ENCODE measurements at regions of chr16 and their contacts with region 1.

Region 1: GRCh38 chr16:74998481-74999218 is at the start of gene ZNRF1:
- DNase-seq: peak; percentile 94 to 95 (median 95)
- ATAC-seq: peak; percentile 86
- H3K4me3 ChIP-seq: peak within 1 kb of the TSS; percentile 62
- H3K27ac ChIP-seq: peak within 1 kb of the TSS; percentile 73
- H3K4me1 ChIP-seq: peaks cover 31 to 40% of the 10 kb centered on the region in 2 experiments
- H3K27me3 ChIP-seq: no peaks in the 10 kb centered on the region
- CTCF ChIP-seq: peak; percentile 83 to 86 (median 84)
- EP300 ChIP-seq: no peak
- POLR2A ChIP-seq: no peak
- RAD21 ChIP-seq: peak; percentile 92 to 95
- polyA plus RNA-seq, gene ZNRF1: 9.5 to 20.0 TPM

Region 2: DNA sequence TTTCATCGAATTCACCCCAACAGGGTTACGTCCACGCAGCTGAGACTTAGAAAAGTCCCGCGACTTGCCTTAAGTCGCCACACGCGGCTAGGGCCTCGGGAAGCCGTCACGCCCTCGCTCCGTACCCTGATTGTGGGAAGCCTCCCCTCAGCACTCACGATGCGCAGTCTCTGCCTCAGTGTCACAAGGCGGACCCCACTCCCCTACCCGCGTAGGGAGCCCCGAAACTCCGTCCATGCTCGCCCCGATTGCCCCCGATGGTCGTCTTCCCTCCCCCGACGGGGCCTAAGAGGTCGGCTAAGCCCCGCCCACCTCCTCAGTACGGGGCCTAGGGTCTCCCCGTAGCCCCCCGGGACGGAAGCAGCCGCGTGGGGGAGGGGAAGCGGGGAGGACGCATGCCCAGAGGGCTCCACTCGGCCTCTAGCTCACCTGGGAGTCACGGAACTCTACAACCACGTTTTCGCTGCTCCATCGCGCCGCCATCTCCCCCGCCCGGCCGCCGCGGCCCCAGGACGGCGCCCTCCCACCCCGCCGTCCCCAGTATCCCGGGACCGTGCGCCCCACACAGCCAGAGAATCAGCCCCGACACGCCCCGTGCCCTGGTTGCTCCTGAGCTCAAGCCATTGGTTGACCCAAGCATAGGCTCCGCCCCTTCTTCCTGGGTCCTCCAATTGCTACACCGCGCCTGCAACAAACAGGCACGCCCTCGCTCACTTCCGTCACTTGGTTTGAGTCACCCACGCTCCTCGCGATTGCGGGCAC is 13.9 kb before region 1 on chr16 and contains the start of gene WDR59:
- CTCF ChIA-PET with region 1: no interaction called
- POLR2A ChIA-PET with region 1: interaction called, 17 read pairs
- in situ Hi-C with region 1: no loop called
- intact Hi-C with region 1: no loop called
- DNase-seq: peak; percentile 95 to 100 (median 96)
- ATAC-seq: peak; percentile 98
- H3K4me3 ChIP-seq: peak within 1 kb of the TSS; percentile 89
- H3K27ac ChIP-seq: peak within 1 kb of the TSS; percentile 85
- H3K4me1 ChIP-seq: peaks cover 17 to 31% of the 10 kb centered on the region in 2 experiments
- H3K27me3 ChIP-seq: no peaks in the 10 kb centered on the region
- CTCF ChIP-seq: no peak
- EP300 ChIP-seq: no peak
- POLR2A ChIP-seq: peak; percentile 85
- RAD21 ChIP-seq: no peak
- polyA plus RNA-seq, gene WDR59: 12.7 to 16.2 TPM

Region 3: DNA sequence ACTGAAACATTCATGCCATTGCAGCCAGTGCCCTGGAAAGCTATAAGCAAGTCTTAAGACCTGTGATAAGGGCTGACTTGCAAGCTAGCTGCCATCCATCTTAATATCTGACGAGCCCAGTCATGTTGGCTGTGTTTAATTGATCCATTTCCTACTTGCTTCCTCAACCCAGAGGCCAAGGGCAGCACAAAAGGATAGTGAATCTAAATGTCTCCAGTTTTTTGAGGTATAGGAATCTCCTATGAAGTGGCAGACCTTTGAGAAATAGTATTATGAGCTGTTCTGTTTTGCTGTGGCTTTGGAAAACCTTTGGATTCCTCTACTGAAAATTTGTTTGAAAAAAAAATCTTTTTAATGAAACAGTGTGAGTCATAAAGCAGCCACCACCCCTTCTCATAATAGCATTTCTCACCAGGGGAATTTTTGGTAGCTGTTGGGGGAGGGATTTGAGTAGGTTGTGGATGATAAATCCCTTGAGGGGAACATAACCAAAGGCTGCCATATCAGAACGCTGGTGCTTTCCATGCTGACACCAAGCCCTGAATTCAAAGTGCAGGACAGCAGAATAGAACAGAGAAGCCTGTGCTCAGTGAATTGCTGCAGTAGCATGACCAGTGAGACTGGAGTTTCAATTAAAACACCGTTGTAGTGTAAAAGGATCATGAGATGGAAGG is 13.1 kb after region 1 on chr16:
- CTCF ChIA-PET with region 1: interaction called, 3 read pairs
- POLR2A ChIA-PET with region 1: interaction called, 32 read pairs
- in situ Hi-C with region 1: no loop called
- intact Hi-C with region 1: no loop called
- DNase-seq: peak in 2 of 4 experiments; percentile 43 to 63
- ATAC-seq: peak; percentile 51
- H3K4me3 ChIP-seq: no peak overlapping the region
- H3K27ac ChIP-seq: peak overlapping the region; percentile 82
- H3K4me1 ChIP-seq: peaks cover 22 to 36% of the 10 kb centered on the region in 2 experiments
- H3K27me3 ChIP-seq: no peaks in the 10 kb centered on the region
- CTCF ChIP-seq: no peak
- EP300 ChIP-seq: no peak
- POLR2A ChIP-seq: no peak
- RAD21 ChIP-seq: no peak

Region 4: GRCh38 chr16:75043175-75043895 is 44.7 kb after region 1 on chr16:
- CTCF ChIA-PET with region 1: no interaction called
- POLR2A ChIA-PET with region 1: interaction called, 3 read pairs
- in situ Hi-C with region 1: no loop called
- intact Hi-C with region 1: loop called (anchors 1 kb)
- DNase-seq: peak; percentile 63 to 92 (median 74)
- ATAC-seq: peak; percentile 88
- H3K4me3 ChIP-seq: no peak overlapping the region; the same call in 1 of the 2 replicates
- H3K27ac ChIP-seq: peak overlapping the region; percentile 95
- H3K4me1 ChIP-seq: peaks cover 26 to 61% of the 10 kb centered on the region in 2 experiments
- H3K27me3 ChIP-seq: no peaks in the 10 kb centered on the region
- CTCF ChIP-seq: no peak; a peak in 1 of 6 replicates
- EP300 ChIP-seq: peak; percentile 99
- POLR2A ChIP-seq: no peak
- RAD21 ChIP-seq: peak in 1 of 2 experiments; percentile 33; a peak in 2 of 4 replicates

Region 5: GRCh38 chr16:75064403-75065148 is 65.9 kb after region 1 on chr16:
- CTCF ChIA-PET with region 1: no interaction called
- POLR2A ChIA-PET with region 1: interaction called, 4 read pairs
- in situ Hi-C with region 1: no loop called
- intact Hi-C with region 1: loop called (anchors 2 kb)
- DNase-seq: peak in 1 of 4 experiments; percentile 66
- ATAC-seq: peak; percentile 13
- H3K4me3 ChIP-seq: 0 out of 2 replicates have a peak overlapping the region, but pooled peaks have one; percentile 8
- H3K27ac ChIP-seq: peak overlapping the region; percentile 73
- H3K4me1 ChIP-seq: peaks cover 51 to 89% of the 10 kb centered on the region in 2 experiments
- H3K27me3 ChIP-seq: no peaks in the 10 kb centered on the region
- CTCF ChIP-seq: no peak
- EP300 ChIP-seq: peak; percentile 38; the same call in 1 of the 2 replicates
- POLR2A ChIP-seq: no peak
- RAD21 ChIP-seq: no peak

Region 6: DNA sequence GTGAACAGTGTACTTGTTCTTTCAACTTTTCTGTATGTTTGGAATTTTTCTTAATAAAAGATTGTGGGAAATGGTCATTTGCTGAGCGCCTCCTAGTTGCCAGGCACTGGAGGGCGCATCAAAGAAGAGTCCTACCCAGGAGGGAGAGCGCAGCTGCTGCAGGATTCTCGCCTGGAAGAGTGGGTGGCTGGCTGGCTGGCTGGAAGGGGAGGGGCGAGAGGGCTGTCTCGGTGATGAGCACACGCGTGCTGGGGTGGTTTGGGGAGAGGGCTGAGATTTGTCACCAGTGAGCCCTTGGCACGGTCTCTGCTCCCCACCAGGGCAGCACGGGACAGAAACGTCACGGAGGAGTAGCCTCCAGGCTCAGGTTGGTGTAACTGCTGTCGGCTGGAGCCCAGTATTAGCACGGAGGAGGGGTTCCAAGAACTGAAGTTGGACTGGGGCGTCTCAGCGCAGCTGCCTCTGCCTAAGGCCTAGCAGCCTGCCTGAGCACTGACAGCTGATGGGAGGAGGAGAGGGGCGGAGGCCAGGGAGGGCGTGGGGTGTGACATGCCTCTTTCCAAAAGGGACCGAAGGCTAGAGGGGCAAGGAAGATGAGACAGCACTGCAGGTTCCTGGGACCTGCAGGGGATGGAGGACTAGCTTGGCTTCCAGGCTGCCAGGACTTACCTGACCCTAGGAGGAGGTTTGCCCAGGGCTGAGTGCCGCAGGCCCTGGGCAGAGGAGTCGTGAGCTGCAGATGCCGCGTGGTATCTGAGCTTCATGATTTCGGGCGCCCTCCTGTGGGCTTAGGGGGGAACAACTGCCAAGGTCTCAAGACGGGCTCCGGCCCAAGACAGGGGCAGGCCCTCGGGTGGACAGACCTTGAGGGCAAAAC is 112.2 kb after region 1 on chr16:
- CTCF ChIA-PET with region 1: interaction called, 42 read pairs
- POLR2A ChIA-PET with region 1: interaction called, 13 read pairs
- in situ Hi-C with region 1: loop called (anchors 5 kb)
- intact Hi-C with region 1: loop called (anchors 1 kb)
- DNase-seq: peak; percentile 87 to 93 (median 88)
- ATAC-seq: peak; percentile 92
- H3K4me3 ChIP-seq: no peak overlapping the region
- H3K27ac ChIP-seq: peak overlapping the region; percentile 13; the same call in 2 of the 3 replicates
- H3K4me1 ChIP-seq: peaks cover 11 to 72% of the 10 kb centered on the region in 2 experiments; a peak in 4 of 5 replicates
- H3K27me3 ChIP-seq: no peaks in the 10 kb centered on the region
- CTCF ChIP-seq: peak; percentile 90 to 95 (median 92)
- EP300 ChIP-seq: peak; percentile 40
- POLR2A ChIP-seq: peak; percentile 25; the same call in 1 of the 2 replicates
- RAD21 ChIP-seq: peak; percentile 95

Region 7: GRCh38 chr16:75198135-75198600 is 199.5 kb after region 1 on chr16:
- CTCF ChIA-PET with region 1: no interaction called
- POLR2A ChIA-PET with region 1: no interaction called
- in situ Hi-C with region 1: no loop called
- intact Hi-C with region 1: loop called (anchors 2 kb)
- DNase-seq: peak in 1 of 4 experiments; percentile 20
- ATAC-seq: peak; percentile 30
- H3K4me3 ChIP-seq: no peak overlapping the region
- H3K27ac ChIP-seq: no peak overlapping the region
- H3K4me1 ChIP-seq: peaks cover 0 to 8% of the 10 kb centered on the region in 2 experiments; a peak in 3 of 5 replicates
- H3K27me3 ChIP-seq: peaks cover 39 to 46% of the 10 kb centered on the region in 2 experiments
- CTCF ChIP-seq: no peak
- EP300 ChIP-seq: no peak
- POLR2A ChIP-seq: no peak
- RAD21 ChIP-seq: no peak